Activated CD4-positive, alpha-beta T cell treated with anti-CD3 and anti-CD28 coated beads for 36 hours (primary cell): ENCODE measurements at regions of chr7 and their contacts with region 1.

Region 1: GRCh38 chr7:7968543-7969305 is at the start of gene GLCCI1:
- DNase-seq: peak; percentile 98
- ATAC-seq: peak; percentile 95
- H3K4me3 Mint-ChIP-seq: peak within 1 kb of the TSS; percentile 89
- H3K27ac Mint-ChIP-seq: peak within 1 kb of the TSS; percentile 95
- H3K4me1 Mint-ChIP-seq: peaks cover 30% of the 10 kb centered on the region
- H3K27me3 Mint-ChIP-seq: no peaks in the 10 kb centered on the region
- total RNA-seq, gene GLCCI1: 12.3 to 15.1 TPM

Region 2: DNA sequence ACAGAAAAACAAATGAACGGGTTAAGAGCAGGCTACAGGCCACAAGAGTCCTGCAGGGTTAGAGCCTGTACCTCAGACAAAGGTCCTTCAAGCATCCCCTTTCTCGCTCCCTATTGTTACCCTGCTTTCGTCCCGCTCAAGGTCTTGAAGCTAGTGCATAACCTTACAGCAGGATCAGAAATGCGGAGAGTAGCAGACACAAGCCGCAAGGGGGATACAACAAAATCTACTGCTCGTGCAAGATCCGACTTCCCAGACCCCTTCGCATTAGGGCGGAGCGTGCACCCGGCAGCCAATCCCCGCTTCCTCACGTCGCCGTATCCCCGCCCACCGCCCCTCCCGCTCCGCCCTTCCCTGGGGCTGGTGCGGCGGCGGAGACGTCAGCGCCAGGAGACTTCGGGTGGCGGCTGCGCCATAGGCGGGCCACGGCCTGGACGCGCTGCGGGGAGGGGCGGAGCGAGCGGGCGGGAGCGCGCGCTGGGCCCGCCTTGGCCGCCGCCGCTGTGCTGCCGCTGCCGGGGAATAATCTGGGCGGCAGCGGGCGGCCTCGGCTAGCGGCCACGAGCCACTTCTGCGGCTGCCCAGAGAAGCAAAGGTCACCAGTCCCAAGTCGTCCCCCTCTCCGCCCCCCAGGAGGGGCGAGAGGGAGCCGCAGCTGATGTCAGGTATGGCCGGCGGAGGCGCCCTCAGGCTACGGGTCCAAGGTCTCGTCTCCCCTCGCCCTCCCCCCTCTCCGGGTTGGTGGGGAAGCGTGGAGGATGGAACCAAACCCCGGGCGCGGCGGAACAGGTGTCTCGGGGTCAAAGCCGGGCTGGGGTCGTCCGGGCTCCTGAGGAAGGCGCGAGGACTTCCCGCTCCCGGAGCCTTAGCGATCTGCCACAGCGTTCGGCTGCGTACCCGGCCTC is 786.3 kb before region 1 on chr7 and contains the start of gene C1GALT1:
- CTCF ChIA-PET with region 1: no interaction called
- POLR2A ChIA-PET with region 1: no interaction called
- intact Hi-C with region 1: loop called (anchors 2 kb)
- DNase-seq: peak; percentile 99
- ATAC-seq: peak; percentile 89
- H3K4me3 Mint-ChIP-seq: peak within 1 kb of the TSS; percentile 81
- H3K27ac Mint-ChIP-seq: peak within 1 kb of the TSS; percentile 99
- H3K4me1 Mint-ChIP-seq: peaks cover 4% of the 10 kb centered on the region
- H3K27me3 Mint-ChIP-seq: no peaks in the 10 kb centered on the region
- total RNA-seq, gene C1GALT1: 35.3 to 37.1 TPM

Region 3: GRCh38 chr7:7719236-7719635 is 249.5 kb before region 1 on chr7:
- CTCF ChIA-PET with region 1: no interaction called
- POLR2A ChIA-PET with region 1: no interaction called
- intact Hi-C with region 1: loop called in 1 of 2 experiments (anchors 2 kb)
- DNase-seq: peak; percentile 66
- ATAC-seq: peak; percentile 99
- H3K4me3 Mint-ChIP-seq: peak overlapping the region; percentile 8
- H3K27ac Mint-ChIP-seq: peak overlapping the region; percentile 84
- H3K4me1 Mint-ChIP-seq: peaks cover 28% of the 10 kb centered on the region
- H3K27me3 Mint-ChIP-seq: no peaks in the 10 kb centered on the region

Region 4: GRCh38 chr7:7944619-7945282 is 24.0 kb before region 1 on chr7:
- CTCF ChIA-PET with region 1: interaction called, 7 read pairs
- POLR2A ChIA-PET with region 1: no interaction called
- intact Hi-C with region 1: loop called in 1 of 2 experiments (anchors 1 kb)
- DNase-seq: peak; percentile 79
- ATAC-seq: peak; percentile 94
- H3K4me3 Mint-ChIP-seq: peak overlapping the region; percentile 58
- H3K27ac Mint-ChIP-seq: peak overlapping the region; percentile 90
- H3K4me1 Mint-ChIP-seq: peaks cover 21% of the 10 kb centered on the region
- H3K27me3 Mint-ChIP-seq: no peaks in the 10 kb centered on the region

Region 5: DNA sequence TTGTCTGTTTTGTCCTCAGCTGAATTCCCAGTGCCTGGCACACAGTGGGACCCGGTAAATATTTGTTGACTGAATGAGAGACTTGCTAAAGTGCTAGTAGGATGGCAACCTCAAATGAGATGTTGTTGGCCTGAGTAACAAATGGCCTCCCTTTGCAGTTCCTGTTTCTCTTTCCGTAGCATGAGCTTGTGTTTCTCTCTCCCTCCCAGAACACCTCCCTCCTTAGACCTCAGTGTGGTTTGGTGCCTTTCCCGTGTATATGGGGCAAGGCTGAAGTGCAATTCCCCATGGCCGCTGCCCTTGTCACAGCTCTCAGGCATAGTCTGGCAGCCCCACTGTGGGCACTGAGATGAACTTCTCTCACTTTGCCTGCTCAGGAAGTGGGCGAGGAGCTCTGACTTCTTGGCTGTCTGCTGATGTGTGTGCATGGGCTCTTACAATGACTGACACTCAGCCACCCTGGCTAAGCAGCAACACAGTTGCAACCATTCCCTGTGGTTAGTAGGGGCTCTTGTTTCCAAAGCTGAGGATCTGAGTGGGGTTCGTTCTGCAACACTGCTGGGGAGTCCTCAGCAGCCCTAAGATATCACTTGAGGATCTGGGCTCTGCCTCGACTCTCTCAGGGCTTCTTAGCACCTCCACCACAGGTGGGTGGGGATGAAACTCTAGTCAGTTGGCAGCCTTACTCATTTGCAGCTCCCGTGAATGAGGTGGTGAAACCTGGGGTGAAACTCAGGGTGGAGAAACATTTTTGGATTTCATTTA is 157.1 kb after region 1 on chr7:
- CTCF ChIA-PET with region 1: no interaction called
- POLR2A ChIA-PET with region 1: interaction called, 3 read pairs
- intact Hi-C with region 1: loop called (anchors 1 to 2 kb)
- DNase-seq: peak; percentile 88
- ATAC-seq: peak; percentile 93
- H3K4me3 Mint-ChIP-seq: peak overlapping the region; percentile 62
- H3K27ac Mint-ChIP-seq: peak overlapping the region; percentile 95
- H3K4me1 Mint-ChIP-seq: peaks cover 81% of the 10 kb centered on the region
- H3K27me3 Mint-ChIP-seq: peaks cover 5% of the 10 kb centered on the region

Region 6: GRCh38 chr7:8190119-8190895 is 221.6 kb after region 1 on chr7:
- CTCF ChIA-PET with region 1: interaction called, 9 read pairs
- POLR2A ChIA-PET with region 1: no interaction called
- intact Hi-C with region 1: loop called in 1 of 2 experiments (anchors 1 kb)
- DNase-seq: peak; percentile 73
- ATAC-seq: peak; percentile 86
- H3K4me3 Mint-ChIP-seq: no peak overlapping the region
- H3K27ac Mint-ChIP-seq: no peak overlapping the region
- H3K4me1 Mint-ChIP-seq: peaks cover 8% of the 10 kb centered on the region
- H3K27me3 Mint-ChIP-seq: no peaks in the 10 kb centered on the region